PC-3 (cell line): ENCODE measurements at regions of chr5 and their contacts with region 1.

Region 1: GRCh38 chr5:164013077-164013670 is 507.8 kb downstream of the MAT2B start:
- DNase-seq: peak; percentile 76
- ATAC-seq: peak; percentile 61
- H3K4me3 ChIP-seq: no peak overlapping the region
- H3K27ac ChIP-seq: no peak overlapping the region
- H3K4me1 ChIP-seq: no peaks in the 10 kb centered on the region
- H3K27me3 ChIP-seq: no peaks in the 10 kb centered on the region
- CTCF ChIP-seq: peak; percentile 77

Region 2: GRCh38 chr5:163564321-163564938 is 448.7 kb before region 1 on chr5:
- CTCF ChIA-PET with region 1: no interaction called
- POLR2A ChIA-PET with region 1: no interaction called
- intact Hi-C with region 1: loop called (anchors 5 kb)
- DNase-seq: peak; percentile 84
- ATAC-seq: no peak
- H3K4me3 ChIP-seq: no peak overlapping the region
- H3K27ac ChIP-seq: no peak overlapping the region
- H3K4me1 ChIP-seq: peaks cover 14% of the 10 kb centered on the region
- H3K27me3 ChIP-seq: peaks cover 57% of the 10 kb centered on the region
- CTCF ChIP-seq: peak; percentile 93

Region 3: DNA sequence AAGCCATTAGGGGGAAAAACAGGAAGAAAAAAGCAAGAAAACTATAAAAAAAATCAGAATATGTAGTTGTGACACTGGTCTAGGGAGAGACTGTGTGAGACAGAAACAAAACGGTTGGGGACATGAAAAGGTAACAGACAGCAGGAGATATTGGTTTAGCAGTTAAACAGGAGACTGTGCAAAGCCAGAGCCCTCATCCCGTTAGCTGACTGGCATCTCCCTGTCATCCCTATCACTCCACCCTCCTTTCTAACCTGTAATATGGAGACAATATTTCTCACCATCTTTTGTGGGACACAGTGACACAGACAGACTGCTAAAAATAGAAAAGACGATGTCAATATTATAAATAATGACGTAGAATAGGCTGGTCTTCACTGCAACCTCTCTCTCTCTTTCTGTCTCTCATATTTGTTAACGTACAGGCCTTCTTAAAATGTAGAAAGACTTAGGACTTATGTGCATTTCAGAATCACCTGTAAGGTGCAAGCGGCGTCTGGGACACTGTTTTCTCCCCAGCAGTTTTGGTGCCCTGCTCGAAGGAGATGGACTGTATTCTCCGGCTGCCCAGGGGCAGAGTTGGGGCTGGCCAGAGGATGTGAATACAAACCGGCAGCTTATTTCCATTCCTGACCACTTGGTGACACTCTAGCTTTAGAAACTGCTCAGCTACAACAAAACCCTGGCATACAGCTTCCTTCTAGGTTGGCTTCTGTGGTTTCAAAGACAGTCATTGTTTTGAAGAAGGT is 317.2 kb before region 1 on chr5:
- CTCF ChIA-PET with region 1: no interaction called
- POLR2A ChIA-PET with region 1: no interaction called
- intact Hi-C with region 1: loop called (anchors 5 kb)
- DNase-seq: peak; percentile 64
- ATAC-seq: peak; percentile 95
- H3K4me3 ChIP-seq: no peak overlapping the region
- H3K27ac ChIP-seq: no peak overlapping the region
- H3K4me1 ChIP-seq: no peaks in the 10 kb centered on the region
- H3K27me3 ChIP-seq: 0 out of 2 replicates have a peak, but pooled peaks cover 7% of the 10 kb centered on the region
- CTCF ChIP-seq: peak; percentile 74

Region 4: GRCh38 chr5:163993126-163993525 is 20.0 kb before region 1 on chr5:
- CTCF ChIA-PET with region 1: no interaction called
- POLR2A ChIA-PET with region 1: no interaction called
- intact Hi-C with region 1: no loop called
- DNase-seq: no peak
- ATAC-seq: no peak
- H3K4me3 ChIP-seq: no peak overlapping the region
- H3K27ac ChIP-seq: no peak overlapping the region
- H3K4me1 ChIP-seq: no peaks in the 10 kb centered on the region
- H3K27me3 ChIP-seq: no peaks in the 10 kb centered on the region
- CTCF ChIP-seq: no peak

Region 5: DNA sequence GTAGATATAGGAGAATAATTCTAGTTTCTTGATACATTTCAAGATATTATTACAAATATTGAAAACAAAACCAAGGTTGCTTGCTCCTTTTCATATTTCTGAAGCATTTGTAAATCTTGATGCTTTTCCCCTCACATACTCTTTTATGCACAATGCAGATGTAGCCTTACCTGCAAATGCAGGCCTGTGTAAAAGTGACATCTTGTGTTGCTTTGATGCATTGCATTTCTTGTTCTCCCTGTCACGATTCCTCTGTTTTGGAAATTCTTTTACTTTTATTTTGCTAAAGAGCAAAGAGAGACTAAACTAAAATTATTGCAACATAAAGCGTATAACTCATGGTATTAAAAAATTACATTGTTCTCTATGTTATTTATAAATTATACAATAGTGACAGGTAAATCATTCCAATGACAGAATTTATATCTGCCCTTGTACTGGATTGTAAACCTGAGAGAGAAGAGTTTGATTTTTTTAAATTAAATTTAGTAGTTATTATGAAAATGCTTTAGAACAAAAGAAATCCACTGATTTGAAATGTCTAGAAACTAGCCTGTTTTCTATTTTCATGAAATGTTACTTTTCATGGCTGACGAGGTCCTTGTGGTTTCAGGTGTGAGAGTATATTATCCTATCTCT is 462.3 kb after region 1 on chr5:
- CTCF ChIA-PET with region 1: no interaction called
- POLR2A ChIA-PET with region 1: interaction called, 5 read pairs
- intact Hi-C with region 1: loop called (anchors 1 kb)
- DNase-seq: peak; percentile 31
- ATAC-seq: peak; percentile 67; the same call in 1 of the 2 replicates
- H3K4me3 ChIP-seq: no peak overlapping the region
- H3K27ac ChIP-seq: no peak overlapping the region
- H3K4me1 ChIP-seq: no peaks in the 10 kb centered on the region
- H3K27me3 ChIP-seq: no peaks in the 10 kb centered on the region
- CTCF ChIP-seq: peak; percentile 69

Region 6: DNA sequence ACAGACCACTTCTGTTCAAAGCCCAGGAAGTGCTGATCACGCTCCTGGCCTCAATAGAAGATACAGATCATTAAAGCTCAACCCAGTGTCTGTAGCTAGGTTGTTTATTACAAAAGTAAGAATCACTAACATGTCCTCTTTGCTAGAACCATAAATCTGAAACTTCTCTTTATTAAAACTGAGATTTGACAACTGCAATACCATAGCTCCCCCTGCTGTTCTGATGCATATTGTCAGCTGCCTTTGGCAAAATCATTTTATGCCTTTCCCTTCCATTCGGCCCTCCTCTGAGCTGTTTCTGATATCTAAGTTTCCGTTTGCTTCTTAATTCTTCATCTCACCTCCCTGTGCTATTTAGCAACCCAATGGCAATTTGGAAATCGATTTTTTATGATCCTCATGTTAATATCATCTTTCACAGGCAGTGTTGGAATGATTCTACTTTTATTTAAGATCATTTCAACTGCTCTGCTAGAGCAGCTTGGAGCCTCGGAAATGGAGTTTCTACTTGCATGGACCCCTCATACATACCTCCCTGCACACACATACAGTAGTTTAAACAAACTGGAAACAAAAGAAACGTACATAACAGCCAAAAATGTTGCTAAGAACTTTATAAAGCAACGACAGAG is 491.1 kb after region 1 on chr5:
- CTCF ChIA-PET with region 1: interaction called, 6 read pairs
- POLR2A ChIA-PET with region 1: no interaction called
- intact Hi-C with region 1: loop called (anchors 1 kb)
- DNase-seq: peak; percentile 68
- ATAC-seq: peak; percentile 70
- H3K4me3 ChIP-seq: peak overlapping the region; percentile 38; the same call in 1 of the 2 replicates
- H3K27ac ChIP-seq: no peak overlapping the region
- H3K4me1 ChIP-seq: no peaks in the 10 kb centered on the region
- H3K27me3 ChIP-seq: no peaks in the 10 kb centered on the region
- CTCF ChIP-seq: peak; percentile 86

Region 7: GRCh38 chr5:164672931-164673694 is 659.9 kb after region 1 on chr5:
- CTCF ChIA-PET with region 1: interaction called, 4 read pairs
- POLR2A ChIA-PET with region 1: no interaction called
- intact Hi-C with region 1: loop called (anchors 1 kb)
- DNase-seq: peak; percentile 13
- ATAC-seq: peak; percentile 51
- H3K4me3 ChIP-seq: no peak overlapping the region
- H3K27ac ChIP-seq: no peak overlapping the region
- H3K4me1 ChIP-seq: no peaks in the 10 kb centered on the region
- H3K27me3 ChIP-seq: no peaks in the 10 kb centered on the region
- CTCF ChIP-seq: no peak; the same call in 1 of the 2 replicates